K562 (cell line): ENCODE measurements at regions of chr18 and their contacts with region 1.

Region 1: DNA sequence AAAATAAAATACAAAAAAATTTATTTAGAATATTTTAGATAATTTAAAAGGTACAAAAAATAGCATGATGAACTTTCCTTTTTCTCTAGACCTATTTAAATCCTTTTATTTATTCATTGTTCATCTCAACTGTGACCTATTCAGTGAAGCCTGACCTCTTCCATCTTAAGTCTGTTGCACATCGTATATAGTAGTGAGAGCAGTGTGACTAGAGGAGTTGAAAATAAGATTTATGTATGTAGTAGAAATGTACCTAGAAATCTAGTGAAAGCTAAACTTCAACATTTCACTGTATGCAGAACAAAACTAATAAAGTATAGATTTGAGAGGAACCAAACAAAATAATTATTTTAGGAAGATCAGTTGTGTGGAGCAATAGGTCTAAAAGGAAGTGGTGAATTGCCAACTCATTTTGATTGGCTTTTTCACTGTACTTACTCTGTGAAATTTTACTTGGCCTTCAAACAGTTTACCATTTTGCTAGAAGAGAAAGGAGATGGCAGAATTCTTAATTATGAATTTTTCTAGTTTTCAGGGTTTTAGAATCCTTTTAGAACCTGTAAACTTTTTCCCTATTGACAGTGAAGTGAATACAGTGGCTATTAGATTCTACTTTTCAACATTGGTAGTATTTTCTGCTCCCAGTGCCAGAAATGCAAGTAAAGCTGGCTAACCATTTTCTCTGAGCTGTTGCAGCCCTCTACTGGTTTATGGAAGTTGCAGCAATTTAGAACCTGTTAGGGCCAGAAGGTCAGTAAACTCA is 11.0 kb downstream of the ANKRD12 start:
- DNase-seq: peak in 2 of 4 experiments; percentile 62 to 81
- ATAC-seq: peak; percentile 88
- H3K4me3 ChIP-seq: no peak overlapping the region
- H3K27ac ChIP-seq: peak overlapping the region; percentile 22; the same call in 2 of the 3 replicates
- H3K4me1 ChIP-seq: peaks cover 3 to 13% of the 10 kb centered on the region in 2 experiments; a peak in 4 of 5 replicates
- H3K27me3 ChIP-seq: no peaks in the 10 kb centered on the region
- CTCF ChIP-seq: peak; percentile 79 to 92 (median 81)
- EP300 ChIP-seq: no peak; the same call in 1 of the 2 replicates
- POLR2A ChIP-seq: no peak
- RAD21 ChIP-seq: peak; percentile 96

Region 2: DNA sequence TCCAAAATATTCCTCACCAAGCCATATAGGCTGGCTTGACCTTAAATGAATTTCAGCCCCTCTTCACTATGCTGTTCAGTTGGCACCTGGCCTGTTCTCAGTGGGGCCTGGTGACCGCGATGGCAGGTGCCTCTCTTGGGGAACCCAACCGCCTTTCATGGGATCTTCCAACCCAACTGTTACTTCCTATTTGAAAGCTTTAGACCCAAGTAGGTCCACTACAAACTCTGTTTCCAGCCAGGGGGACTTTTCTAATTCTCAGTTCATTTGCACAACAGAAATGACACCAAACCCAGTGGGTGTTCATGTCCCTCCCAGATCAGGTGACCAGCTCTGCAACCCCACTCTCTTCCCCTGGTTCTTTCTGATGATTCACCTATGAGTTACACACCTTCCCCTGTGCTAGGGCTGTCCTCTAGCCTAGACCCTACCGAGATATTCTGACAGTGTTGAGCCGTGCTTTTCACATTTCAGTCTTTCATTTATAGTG is 80.8 kb before region 1 on chr18:
- CTCF ChIA-PET with region 1: no interaction called
- POLR2A ChIA-PET with region 1: no interaction called
- in situ Hi-C with region 1: loop called (anchors 5 kb)
- intact Hi-C with region 1: no loop called
- DNase-seq: peak in 2 of 4 experiments; percentile 32 to 44
- ATAC-seq: peak; percentile 62
- H3K4me3 ChIP-seq: no peak overlapping the region
- H3K27ac ChIP-seq: no peak overlapping the region
- H3K4me1 ChIP-seq: peaks cover 3 to 10% of the 10 kb centered on the region in 2 experiments; a peak in 3 of 5 replicates
- H3K27me3 ChIP-seq: no peaks in the 10 kb centered on the region
- CTCF ChIP-seq: no peak
- EP300 ChIP-seq: no peak
- POLR2A ChIP-seq: no peak
- RAD21 ChIP-seq: no peak